GM10248 (cell line): ENCODE measurements at regions of chr4 and their contacts with region 1.

Region 1: DNA sequence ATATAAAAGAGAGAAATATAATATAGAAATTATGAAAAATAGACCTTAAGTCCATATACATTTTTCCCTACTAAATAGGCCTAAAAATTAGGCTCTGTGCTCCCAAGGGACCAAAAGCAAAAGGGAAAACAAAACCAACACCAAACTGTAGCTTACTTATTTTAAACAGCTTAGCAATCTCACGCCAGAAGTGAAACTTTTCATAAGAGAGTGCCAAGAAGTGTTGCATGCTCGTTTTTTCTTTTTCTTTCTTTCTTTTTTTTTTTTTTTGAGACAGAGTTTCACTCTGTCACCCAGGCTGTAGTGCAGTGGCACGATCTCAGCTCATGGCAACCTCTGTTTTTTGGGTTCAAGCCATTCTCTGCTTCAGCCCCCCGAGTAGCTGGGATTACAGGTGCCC is 250.4 kb downstream of the TMA16 start:
- DNase-seq: peak; percentile 73
- CTCF ChIP-seq: no peak

Region 2: GRCh38 chr4:163755013-163755412 is 10.2 kb after region 1 on chr4:
- CTCF ChIA-PET with region 1: interaction called, 35 read pairs
- POLR2A ChIA-PET with region 1: no interaction called
- DNase-seq: peak; percentile 15
- CTCF ChIP-seq: peak; percentile 33